K562 (cell line): ENCODE measurements at regions of chr5 and their contacts with region 1.

Region 1: DNA sequence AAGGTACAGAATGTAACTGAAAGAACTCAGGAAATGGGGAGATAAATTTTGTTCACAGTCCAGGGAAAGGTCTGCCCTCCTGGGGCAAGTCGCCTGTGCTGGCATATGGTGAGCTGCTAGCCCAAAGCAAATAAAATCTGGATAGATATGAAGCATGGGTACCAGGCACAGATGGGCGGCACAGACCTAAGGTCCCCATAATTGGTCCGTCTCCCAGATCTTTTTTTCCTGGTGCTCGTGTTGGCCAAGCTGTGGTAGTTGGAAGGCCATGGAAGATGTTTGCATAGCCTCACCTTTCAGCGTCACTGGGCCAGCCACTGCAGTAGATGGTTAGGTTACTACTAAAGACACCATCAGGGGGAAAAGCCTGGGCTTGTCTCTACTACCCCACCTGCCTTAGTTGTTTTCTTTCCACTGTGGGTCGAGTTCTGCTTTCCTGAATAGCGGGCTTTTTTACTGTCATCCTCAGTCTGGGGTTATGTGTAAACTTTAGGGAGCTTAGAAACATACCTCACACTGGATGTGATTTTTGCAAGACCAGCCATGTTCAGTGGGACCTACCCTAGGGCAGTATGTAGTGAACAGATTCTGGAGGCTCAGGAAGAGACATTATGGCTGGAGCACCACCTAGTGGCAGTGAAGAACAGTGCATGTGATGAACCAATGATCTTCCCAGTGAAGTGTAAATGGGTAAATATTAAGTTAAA is 24.2 kb upstream of the GLRX start:
- DNase-seq: peak; percentile 76 to 80 (median 78)
- ATAC-seq: peak; percentile 81
- H3K4me3 ChIP-seq: no peak overlapping the region
- H3K27ac ChIP-seq: no peak overlapping the region
- H3K4me1 ChIP-seq: peaks cover 0 to 20% of the 10 kb centered on the region in 2 experiments; a peak in 4 of 5 replicates
- H3K27me3 ChIP-seq: no peaks in the 10 kb centered on the region
- CTCF ChIP-seq: peak; percentile 83 to 96 (median 89)
- EP300 ChIP-seq: no peak
- POLR2A ChIP-seq: no peak
- RAD21 ChIP-seq: peak; percentile 95 to 97

Region 2: DNA sequence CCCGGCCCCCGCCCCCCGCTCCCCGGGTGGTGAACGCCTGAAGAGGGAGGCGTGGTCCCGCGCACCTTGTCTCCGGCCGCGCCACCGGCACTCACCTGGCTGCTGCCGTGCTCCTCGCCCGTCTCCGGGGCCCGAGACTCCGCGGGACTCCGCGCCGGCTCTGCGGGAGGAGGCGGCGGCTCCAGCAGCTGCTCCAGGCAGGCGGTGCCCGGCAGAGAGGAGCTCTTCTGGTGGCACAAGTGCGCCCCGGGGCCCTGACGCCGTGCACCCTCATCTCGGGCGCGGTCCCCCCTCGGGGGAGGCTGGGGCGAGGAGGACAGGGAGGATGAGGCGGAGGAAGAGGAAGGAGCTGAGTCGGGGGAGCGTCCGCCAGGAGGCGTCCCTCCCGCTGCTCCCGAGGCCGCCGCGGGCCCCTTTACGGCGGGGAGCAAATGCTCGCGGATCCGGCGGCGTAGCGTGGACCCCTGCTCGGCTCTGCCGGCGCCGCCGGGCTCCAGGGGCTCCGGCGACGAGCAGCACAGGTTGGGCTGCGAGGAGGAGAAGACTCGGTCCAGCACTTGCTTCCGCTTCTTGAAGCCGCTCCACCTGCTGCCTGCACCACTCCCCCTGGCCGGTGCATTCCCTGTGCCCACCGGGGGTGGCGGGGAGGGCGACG is 562.8 kb before region 1 on chr5:
- CTCF ChIA-PET with region 1: no interaction called
- POLR2A ChIA-PET with region 1: no interaction called
- in situ Hi-C with region 1: loop called (anchors 10 kb)
- intact Hi-C with region 1: loop called (anchors 1 kb)
- DNase-seq: peak; percentile 36 to 57 (median 41)
- ATAC-seq: peak; percentile 91
- H3K4me3 ChIP-seq: peak overlapping the region; percentile 43
- H3K27ac ChIP-seq: no peak overlapping the region
- H3K4me1 ChIP-seq: peaks cover 0 to 17% of the 10 kb centered on the region in 2 experiments; a peak in 2 of 5 replicates
- H3K27me3 ChIP-seq: peaks cover 20 to 22% of the 10 kb centered on the region in 2 experiments
- CTCF ChIP-seq: peak; percentile 43 to 57 (median 46); a peak in 5 of 6 replicates
- EP300 ChIP-seq: no peak
- POLR2A ChIP-seq: no peak
- RAD21 ChIP-seq: peak; percentile 30 to 62

Region 3: DNA sequence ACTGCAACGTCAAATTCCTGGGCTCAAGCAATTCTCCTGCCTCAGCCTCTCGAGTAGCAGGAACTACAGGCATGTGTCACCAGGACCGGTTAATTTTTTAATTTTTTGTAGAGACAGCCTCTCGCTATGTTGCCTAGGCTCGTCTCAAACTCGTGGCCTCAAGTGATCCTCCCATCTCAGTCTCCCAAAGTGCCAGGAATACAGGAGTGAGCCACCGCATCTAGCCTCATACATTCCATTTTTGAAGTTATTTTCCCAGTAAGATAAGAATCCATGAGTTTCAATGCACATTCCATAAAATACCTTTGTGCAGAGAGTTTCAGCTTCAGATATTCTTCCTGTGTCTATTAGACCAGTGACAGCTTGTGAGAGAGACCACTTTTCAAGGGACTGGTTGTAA is 362.3 kb before region 1 on chr5:
- CTCF ChIA-PET with region 1: no interaction called
- POLR2A ChIA-PET with region 1: no interaction called
- in situ Hi-C with region 1: no loop called
- intact Hi-C with region 1: no loop called
- DNase-seq: no peak
- ATAC-seq: no peak
- H3K4me3 ChIP-seq: no peak overlapping the region
- H3K27ac ChIP-seq: no peak overlapping the region
- H3K4me1 ChIP-seq: no peaks in the 10 kb centered on the region
- H3K27me3 ChIP-seq: no peaks in the 10 kb centered on the region
- CTCF ChIP-seq: no peak
- EP300 ChIP-seq: no peak
- POLR2A ChIP-seq: no peak
- RAD21 ChIP-seq: no peak

Region 4: DNA sequence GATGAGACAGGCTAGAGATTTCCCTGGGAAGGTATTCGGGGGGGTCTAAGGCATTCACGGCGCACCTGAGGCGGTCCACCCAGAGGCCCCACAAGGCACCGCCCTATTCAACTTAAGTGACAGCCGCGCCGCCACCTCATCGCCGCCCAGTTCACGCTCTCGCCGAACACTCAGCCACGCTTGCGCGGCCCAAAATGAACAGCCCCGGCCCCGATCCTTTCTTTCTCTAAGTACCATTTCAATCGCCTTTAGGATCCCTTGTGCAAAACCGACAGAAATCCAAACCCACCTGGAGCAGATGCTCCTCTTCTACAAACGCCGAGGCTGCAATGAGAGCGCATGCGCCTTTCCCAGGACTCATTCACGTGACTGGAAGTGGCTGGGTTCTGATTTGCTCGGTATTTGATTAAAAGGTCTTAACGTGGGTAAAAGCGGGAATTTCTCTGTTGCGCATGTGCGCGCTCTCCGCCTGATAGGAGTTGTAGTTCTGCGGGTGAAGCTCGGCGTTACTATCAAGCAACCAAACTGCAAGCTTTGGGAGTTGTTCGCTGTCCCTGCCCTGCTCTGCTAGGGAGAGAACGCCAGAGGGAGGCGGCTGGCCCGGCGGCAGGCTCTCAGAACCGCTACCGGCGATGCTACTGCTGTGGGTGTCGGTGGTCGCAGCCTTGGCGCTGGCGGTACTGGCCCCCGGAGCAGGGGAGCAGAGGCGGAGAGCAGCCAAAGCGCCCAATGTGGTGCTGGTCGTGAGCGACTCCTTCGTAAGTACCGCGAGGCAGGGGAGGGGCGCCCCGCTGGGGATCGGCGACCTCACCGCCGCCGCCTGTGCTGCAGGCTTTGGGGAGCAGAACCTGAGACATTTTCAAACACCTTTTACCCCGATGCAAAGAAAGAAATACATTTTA is 291.8 kb before region 1 on chr5 and contains the starts of genes ARSK and SKIC3:
- CTCF ChIA-PET with region 1: no interaction called
- POLR2A ChIA-PET with region 1: no interaction called
- in situ Hi-C with region 1: no loop called
- intact Hi-C with region 1: loop called (anchors 10 kb)
- DNase-seq: peak; percentile 86 to 98 (median 92)
- ATAC-seq: peak; percentile 92
- H3K4me3 ChIP-seq: peak within 1 kb of the TSS; percentile 66
- H3K27ac ChIP-seq: peak within 1 kb of the TSS; percentile 84
- H3K4me1 ChIP-seq: peaks cover 7 to 15% of the 10 kb centered on the region in 2 experiments; a peak in 4 of 5 replicates
- H3K27me3 ChIP-seq: no peaks in the 10 kb centered on the region
- CTCF ChIP-seq: peak; percentile 23 to 49 (median 31)
- EP300 ChIP-seq: no peak; the same call in 1 of the 2 replicates
- POLR2A ChIP-seq: peak; percentile 91
- RAD21 ChIP-seq: peak; percentile 35 to 40; a peak in 2 of 4 replicates
- polyA plus RNA-seq, gene ARSK: 2.7 to 2.8 TPM
- polyA plus RNA-seq, gene SKIC3: 35.1 to 44.1 TPM

Region 5: DNA sequence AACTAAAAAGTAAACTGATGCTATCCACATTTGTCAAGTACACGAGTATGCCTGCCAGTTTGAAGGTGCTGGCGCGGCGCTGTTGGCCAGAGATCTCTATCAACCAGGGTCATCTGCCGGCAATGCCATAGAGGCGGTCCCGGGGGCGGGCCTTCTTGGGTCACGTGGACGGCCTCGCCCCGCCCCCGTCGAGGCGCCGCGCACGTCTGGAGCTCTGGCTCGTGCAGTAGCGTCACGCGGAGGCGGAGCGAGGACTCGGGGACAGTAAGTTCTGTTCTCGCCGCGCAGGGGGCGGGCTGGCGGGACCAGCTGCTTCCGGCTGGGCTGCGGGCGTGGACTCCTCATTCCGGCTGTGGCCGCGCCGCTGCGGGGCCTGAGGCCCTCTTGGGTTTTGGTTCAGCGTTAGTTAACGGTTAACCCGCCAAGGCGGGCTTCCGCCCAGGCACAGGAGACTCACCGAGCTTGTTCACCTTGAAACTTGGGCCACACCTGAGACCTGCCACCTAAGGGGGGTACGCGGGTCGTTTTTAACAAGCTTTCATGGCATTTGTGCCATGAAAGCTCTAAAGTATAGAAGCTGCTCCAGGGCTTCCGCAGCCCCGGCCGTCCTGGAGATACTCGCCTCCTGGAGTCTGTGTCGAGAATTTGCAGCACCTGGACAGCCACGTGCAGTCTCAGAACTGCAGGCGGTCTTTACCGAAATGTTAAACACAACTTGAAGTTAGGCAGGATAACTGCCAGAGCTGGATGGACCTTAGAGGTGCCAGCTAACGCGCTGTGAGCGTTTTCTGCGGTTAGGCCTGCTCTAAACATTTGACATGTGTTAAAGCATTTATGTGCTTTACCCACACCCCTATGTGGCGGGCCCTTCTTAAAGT is 199.9 kb before region 1 on chr5 and contains the start of gene RFESD:
- CTCF ChIA-PET with region 1: interaction called, 21 read pairs
- POLR2A ChIA-PET with region 1: interaction called, 4 read pairs
- in situ Hi-C with region 1: no loop called
- intact Hi-C with region 1: loop called (anchors 1 kb)
- DNase-seq: peak; percentile 92 to 99 (median 94)
- ATAC-seq: peak; percentile 89
- H3K4me3 ChIP-seq: peak within 1 kb of the TSS; percentile 49
- H3K27ac ChIP-seq: peak within 1 kb of the TSS; percentile 95
- H3K4me1 ChIP-seq: peaks cover 13 to 18% of the 10 kb centered on the region in 2 experiments
- H3K27me3 ChIP-seq: no peaks in the 10 kb centered on the region
- CTCF ChIP-seq: peak in 1 of 3 experiments; percentile 27; a peak in 2 of 6 replicates
- EP300 ChIP-seq: peak; percentile 52; the same call in 1 of the 2 replicates
- POLR2A ChIP-seq: peak; percentile 95
- RAD21 ChIP-seq: no peak; a peak in 2 of 4 replicates
- polyA plus RNA-seq, gene RFESD: 506 to 600 TPM

Region 6: DNA sequence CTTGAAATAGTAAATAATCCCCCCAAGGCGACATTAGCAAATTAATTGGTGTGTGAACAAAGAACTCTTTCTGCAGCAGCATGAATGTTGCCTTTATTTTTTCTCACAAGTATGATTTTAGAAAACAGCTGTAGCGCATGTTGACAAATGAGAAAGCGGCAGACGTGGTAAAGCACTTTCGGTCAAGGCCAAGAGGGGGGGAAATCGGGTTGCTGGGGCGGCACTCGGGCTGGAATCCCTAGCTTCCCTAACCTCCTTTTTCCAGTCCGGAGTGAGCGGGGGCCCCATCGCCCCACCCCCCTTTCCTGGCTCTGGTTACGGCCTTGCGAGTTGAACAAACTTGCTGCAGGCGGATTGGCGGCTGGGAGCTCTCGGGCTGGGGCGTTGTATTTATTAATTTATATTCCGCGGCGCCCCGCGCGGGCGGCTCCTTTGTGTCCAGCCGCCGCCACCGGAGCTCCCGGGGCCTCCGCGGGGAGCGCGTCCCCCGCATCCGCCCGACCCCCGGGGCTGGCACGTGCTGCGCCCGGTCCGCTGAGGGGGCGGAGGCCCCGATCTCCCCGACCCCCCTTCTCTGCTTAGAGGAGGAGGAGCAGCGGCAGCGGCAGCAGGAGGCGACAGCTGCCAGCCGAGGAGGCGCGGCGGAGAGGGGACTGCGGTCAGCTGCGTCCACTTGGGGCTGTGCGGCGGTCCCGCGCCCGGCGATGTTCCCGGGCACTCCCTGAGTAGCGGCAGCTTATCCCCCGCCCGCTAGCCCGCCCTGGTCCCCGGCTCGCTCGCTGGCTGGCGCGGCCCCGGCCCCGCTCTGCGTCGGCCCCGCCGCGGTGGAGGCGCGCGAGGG is 115.8 kb before region 1 on chr5 and contains the start of gene RHOBTB3:
- CTCF ChIA-PET with region 1: no interaction called
- POLR2A ChIA-PET with region 1: interaction called, 3 read pairs
- in situ Hi-C with region 1: no loop called
- intact Hi-C with region 1: loop called (anchors 5 kb)
- DNase-seq: peak; percentile 73 to 94 (median 86)
- ATAC-seq: peak; percentile 58
- H3K4me3 ChIP-seq: peak within 1 kb of the TSS; percentile 81
- H3K27ac ChIP-seq: peak within 1 kb of the TSS; percentile 85
- H3K4me1 ChIP-seq: peaks cover 38 to 40% of the 10 kb centered on the region in 2 experiments
- H3K27me3 ChIP-seq: no peaks in the 10 kb centered on the region; a peak in 1 of 5 replicates
- CTCF ChIP-seq: peak in 2 of 3 experiments; percentile 20 to 31; a peak in 2 of 6 replicates
- EP300 ChIP-seq: peak; percentile 54
- POLR2A ChIP-seq: no peak
- RAD21 ChIP-seq: peak; percentile 27 to 37; a peak in 1 of 4 replicates
- polyA plus RNA-seq, gene RHOBTB3: 39.7 to 53.0 TPM

Region 7: DNA sequence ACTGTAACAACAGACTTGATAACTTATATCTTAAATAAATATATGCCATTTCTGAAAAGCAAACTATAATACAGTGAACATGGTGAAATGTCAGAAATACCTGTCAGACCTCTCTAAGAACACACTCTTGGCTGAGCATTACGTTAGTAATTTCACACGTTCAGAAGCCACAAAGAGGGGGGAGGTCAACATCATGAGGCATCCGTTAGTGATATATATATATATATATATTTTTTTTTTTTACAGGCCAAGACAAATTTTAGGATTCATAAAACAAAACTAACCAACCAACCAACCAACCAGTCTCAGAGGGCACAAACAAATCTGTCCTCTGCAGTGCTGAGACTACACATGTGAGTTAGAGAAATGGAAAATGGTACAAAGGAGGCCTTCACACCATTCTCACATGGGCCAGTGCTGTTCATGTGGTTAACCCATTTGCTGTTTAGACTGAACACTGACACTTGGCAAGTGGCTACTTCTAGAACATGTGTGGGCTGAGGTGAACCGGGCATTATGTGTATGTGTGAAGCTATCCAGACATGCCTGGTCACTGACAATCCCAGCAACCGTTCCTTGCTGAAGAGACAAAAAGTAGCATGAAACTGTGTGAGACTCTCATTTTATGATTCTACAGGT is 60.5 kb after region 1 on chr5:
- CTCF ChIA-PET with region 1: no interaction called
- POLR2A ChIA-PET with region 1: no interaction called
- in situ Hi-C with region 1: no loop called
- intact Hi-C with region 1: no loop called
- DNase-seq: no peak
- ATAC-seq: no peak
- H3K4me3 ChIP-seq: no peak overlapping the region
- H3K27ac ChIP-seq: no peak overlapping the region
- H3K4me1 ChIP-seq: no peaks in the 10 kb centered on the region
- H3K27me3 ChIP-seq: no peaks in the 10 kb centered on the region
- CTCF ChIP-seq: no peak
- EP300 ChIP-seq: no peak
- POLR2A ChIP-seq: no peak
- RAD21 ChIP-seq: no peak